Endothelial cell of umbilical vein (primary cell): ENCODE measurements at regions of chr7 and their contacts with region 1.

Region 1: DNA sequence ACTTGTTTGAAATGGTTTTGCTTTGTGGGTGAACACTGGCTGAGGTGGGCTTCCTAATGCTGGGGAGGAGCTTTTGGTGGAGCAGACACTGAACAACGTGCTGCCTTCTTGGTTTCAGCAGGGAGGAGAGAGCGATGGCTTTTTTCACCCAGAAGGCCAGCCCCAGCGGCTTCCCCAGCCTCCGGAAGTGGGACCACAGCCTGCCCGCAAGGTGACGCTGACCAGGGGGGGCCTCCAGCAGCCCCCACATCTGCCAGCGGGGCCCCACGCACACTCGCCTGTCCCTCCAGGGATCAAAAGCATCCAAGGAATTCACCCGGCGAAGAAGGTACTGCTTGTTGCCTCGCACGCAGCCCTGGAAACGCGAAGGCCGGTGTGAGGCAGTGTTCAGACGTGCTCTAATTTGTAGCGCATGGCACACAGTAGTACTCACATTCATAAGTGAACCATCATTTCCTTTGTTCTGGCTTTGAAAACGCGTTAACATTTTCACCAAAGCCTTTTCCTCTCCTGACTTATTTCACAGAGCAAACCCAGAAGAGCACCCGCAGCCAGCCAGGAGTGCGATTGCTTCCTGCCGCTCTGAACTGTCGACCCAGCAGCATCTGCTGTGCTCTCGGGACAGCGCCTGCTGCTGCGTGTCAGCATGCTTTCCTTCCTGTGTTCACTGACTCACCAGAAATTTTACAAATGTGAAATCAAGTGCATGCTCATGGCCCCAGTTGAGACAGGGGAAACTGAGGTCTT is 48.4 kb downstream of the SHH start:
- DNase-seq: peak; percentile 88
- H3K4me3 ChIP-seq: no peak overlapping the region
- H3K27ac ChIP-seq: peak overlapping the region; percentile 69
- H3K4me1 ChIP-seq: peaks cover 16% of the 10 kb centered on the region
- H3K27me3 ChIP-seq: no peaks in the 10 kb centered on the region
- CTCF ChIP-seq: no peak
- POLR2A ChIP-seq: no peak

Region 2: GRCh38 chr7:155306673-155307470 is 457.0 kb before region 1 on chr7:
- CTCF ChIA-PET with region 1: no interaction called
- POLR2A ChIA-PET with region 1: no interaction called
- dilution Hi-C with region 1: no loop called
- intact Hi-C with region 1: no loop called
- DNase-seq: no peak
- H3K4me3 ChIP-seq: no peak overlapping the region
- H3K27ac ChIP-seq: no peak overlapping the region
- H3K4me1 ChIP-seq: no peaks in the 10 kb centered on the region
- H3K27me3 ChIP-seq: no peaks in the 10 kb centered on the region
- CTCF ChIP-seq: no peak
- POLR2A ChIP-seq: no peak

Region 3: DNA sequence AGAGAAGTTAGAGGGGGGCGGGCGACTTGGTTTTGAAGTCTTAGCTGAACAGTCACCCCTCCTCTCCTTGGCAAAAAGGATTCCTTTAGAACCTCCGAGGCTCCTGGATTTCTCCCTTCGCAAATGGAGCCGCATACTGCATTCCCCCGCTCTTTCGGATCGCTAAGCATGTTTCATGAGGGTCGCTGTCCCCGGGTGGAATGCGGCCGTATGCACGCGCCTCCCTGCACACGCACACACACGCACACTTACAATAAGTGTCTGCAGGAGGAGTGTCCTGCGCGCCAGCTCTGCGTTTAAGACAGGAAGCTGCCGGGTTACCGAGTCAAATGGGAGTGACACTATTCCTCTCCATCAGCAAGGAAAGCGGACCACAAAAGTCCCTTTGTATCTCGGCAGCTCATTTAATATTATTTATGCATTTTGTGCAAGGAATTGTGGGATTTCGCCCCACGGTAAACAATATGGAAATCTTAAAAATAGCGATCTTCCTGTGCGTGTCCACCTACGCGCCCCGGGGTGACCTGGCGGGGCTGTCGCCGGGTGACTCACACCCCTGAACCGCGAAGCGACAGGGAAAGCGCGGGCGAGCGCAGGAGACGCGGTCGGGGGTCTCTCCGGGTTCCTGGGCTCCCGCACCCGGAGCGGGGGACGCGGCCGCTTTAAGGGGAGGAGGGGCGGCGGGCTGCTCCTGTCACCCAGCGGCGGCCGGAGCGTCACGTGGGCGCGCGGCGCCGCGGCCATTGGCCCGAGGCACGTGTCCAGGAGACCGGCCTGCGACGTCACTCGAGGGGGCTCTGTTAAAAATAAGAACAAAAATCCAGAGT is 306.9 kb before region 1 on chr7:
- CTCF ChIA-PET with region 1: no interaction called
- POLR2A ChIA-PET with region 1: no interaction called
- dilution Hi-C with region 1: no loop called
- intact Hi-C with region 1: loop called (anchors 10 kb)
- DNase-seq: peak; percentile 49
- H3K4me3 ChIP-seq: peak overlapping the region in 2 of 3 experiments; percentile 27 to 34
- H3K27ac ChIP-seq: no peak overlapping the region
- H3K4me1 ChIP-seq: no peaks in the 10 kb centered on the region
- H3K27me3 ChIP-seq: peaks cover 78 to 94% of the 10 kb centered on the region in 2 experiments
- CTCF ChIP-seq: no peak
- POLR2A ChIP-seq: no peak

Region 4: DNA sequence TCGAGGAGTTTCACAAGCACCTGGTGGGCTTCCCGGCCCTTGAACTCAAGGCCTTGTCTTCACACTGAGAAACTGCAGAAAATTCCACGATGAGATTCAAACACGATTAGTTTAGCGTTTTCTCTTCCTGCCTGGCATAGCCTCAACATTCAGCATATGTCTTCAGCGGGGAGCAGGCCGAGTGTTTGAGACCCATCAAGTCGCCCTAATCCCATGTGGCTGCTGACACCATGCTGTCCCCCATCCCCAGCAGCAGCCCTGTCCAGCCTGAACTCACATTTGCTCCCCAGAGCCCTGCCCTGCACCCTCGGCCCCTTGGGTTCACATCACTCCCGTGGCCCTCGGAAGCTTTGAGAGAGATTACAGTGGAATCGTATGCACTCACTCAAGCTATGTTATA is 154.7 kb before region 1 on chr7:
- CTCF ChIA-PET with region 1: no interaction called
- POLR2A ChIA-PET with region 1: no interaction called
- dilution Hi-C with region 1: no loop called
- intact Hi-C with region 1: no loop called
- DNase-seq: no peak
- H3K4me3 ChIP-seq: no peak overlapping the region
- H3K27ac ChIP-seq: no peak overlapping the region
- H3K4me1 ChIP-seq: no peaks in the 10 kb centered on the region
- H3K27me3 ChIP-seq: no peaks in the 10 kb centered on the region
- CTCF ChIP-seq: no peak
- POLR2A ChIP-seq: no peak

Region 5: DNA sequence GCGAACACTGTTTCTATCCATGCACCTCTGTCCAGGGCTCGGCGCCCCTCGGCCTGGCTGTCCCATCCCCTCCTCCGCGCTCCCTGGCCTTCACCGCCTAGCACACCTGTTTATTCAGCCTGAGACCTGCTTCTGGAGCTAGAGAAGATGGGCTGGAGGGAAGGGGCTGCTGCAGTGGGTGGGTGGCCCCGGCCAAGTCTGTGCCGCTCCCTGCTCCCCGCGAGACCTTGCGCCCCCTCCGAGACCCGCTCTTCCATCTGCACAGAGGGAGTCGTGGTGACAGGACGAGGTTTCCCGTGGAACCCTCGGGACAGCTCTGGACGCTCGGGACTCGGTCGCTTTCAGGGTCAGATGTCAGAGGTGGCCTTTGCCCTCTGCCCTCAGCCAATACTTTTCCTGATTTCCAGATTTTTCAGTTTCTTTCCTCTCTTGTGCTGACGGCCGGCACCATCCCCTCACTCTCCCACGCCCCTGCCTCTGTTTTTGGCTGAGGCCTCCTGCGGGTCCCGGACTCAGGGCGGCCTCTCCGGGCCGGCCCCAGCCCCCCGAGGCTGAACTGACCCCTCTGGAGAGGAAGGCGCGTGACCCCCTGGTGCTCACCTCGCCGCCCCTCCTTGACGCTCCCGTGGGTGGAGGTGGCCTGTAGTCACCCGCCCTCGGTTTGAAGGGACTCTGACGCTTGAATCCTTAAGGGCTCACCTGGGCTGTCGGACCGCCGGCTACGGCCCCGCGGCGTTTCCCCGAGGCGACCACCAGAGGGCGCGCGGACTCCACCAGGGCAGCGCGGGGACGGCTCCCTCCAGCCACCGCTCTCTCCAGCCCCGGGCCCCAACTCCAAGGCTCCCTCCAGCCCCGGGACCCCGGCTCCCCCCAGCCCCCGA is 32.8 kb after region 1 on chr7:
- CTCF ChIA-PET with region 1: no interaction called
- POLR2A ChIA-PET with region 1: no interaction called
- dilution Hi-C with region 1: no loop called
- intact Hi-C with region 1: no loop called
- DNase-seq: no peak
- H3K4me3 ChIP-seq: no peak overlapping the region
- H3K27ac ChIP-seq: no peak overlapping the region
- H3K4me1 ChIP-seq: no peaks in the 10 kb centered on the region
- H3K27me3 ChIP-seq: peaks cover 6 to 11% of the 10 kb centered on the region in 2 experiments
- CTCF ChIP-seq: peak; percentile 63 to 97
- POLR2A ChIP-seq: no peak